ENCODE measurements at regions of chr5 and their contacts with region 1.

Region 1: GRCh38 chr5:8842971-8843551 is 702.8 kb downstream of the SEMA5A start:
- DNase-seq: no peak
- H3K4me3 ChIP-seq: no peak overlapping the region
- CTCF ChIP-seq: peak; percentile 64

Region 2: GRCh38 chr5:8756498-8757084 is 86.5 kb before region 1 on chr5:
- CTCF ChIA-PET with region 1: interaction called, 27 read pairs
- POLR2A ChIA-PET with region 1: no interaction called
- DNase-seq: no peak
- H3K4me3 ChIP-seq: no peak overlapping the region
- CTCF ChIP-seq: peak; percentile 57

Region 3: DNA sequence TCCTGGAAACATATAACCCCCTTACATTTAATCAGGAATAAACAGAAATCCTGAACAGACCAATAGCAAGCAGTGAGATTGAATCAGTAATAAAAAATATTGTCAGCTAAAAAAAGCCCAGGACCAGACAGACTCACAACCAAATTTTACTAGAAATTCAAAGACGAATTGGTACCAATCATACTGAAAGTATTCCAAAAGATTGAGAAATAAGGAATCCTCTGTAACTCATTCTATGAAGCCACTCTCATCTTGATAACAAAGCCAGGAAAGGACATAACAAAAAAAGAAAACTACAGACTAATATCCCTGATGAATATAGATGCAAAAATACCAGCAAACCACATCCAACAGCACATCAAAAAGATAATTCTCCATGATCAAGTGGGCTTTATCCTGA is 11.2 kb before region 1 on chr5:
- CTCF ChIA-PET with region 1: interaction called, 58 read pairs
- POLR2A ChIA-PET with region 1: interaction called, 4 read pairs
- DNase-seq: no peak
- H3K4me3 ChIP-seq: no peak overlapping the region
- CTCF ChIP-seq: no peak